ENCODE measurements at regions of chr1 and their contacts with region 1.

Region 1: DNA sequence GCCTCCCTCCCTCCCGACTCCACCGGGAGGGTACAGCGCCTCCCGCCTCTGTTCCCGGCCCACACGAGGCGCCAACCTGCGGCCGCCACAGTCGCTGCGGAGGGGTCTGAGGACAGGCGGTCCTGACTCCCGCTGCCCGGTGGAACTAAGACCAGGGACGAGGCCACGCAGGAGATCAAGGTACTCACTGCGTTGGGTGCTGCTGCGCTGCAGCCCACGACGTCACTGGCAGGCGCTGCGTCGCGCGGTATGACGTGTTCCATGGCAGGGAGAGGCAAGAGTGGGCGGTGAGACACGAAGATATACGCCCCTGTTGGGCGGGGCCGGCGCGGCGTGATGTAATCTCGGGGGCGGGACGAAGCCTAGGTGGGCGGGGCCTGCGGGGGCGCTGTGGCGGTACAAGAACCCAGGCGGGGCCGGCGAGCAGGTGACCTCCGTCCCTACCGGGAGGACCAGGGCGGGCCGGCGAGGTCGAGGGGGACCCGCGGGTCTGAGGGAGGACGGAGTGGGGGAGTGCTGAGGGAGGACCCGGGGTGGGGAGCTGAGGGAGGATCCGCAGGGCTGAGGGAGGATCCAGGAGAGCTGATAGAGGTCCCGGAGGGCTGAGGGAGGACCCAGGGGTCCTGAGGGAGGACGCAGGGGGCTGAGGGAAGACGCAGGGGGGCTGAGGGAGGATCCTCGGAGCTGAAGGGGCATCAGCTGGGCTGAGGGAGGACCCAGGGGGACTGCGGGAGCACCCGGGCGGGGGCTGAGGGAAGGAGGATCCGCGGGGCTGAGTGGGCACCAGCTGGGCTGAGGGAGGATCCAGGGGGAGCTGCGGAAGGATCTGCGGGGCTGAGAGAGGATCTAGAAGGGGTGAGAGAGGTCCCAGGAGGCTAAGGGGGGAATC is at the start of gene MRPL55:
- DNase-seq: peak; percentile 99
- H3K4me3 Mint-ChIP-seq: peak within 1 kb of the TSS; percentile 87
- H3K27ac Mint-ChIP-seq: peak within 1 kb of the TSS; percentile 89
- H3K4me1 Mint-ChIP-seq: peaks cover 28% of the 10 kb centered on the region
- H3K27me3 Mint-ChIP-seq: peaks cover 3% of the 10 kb centered on the region
- total RNA-seq, gene MRPL55: 53.3 and 61.7 TPM in 2 replicates

Region 2: DNA sequence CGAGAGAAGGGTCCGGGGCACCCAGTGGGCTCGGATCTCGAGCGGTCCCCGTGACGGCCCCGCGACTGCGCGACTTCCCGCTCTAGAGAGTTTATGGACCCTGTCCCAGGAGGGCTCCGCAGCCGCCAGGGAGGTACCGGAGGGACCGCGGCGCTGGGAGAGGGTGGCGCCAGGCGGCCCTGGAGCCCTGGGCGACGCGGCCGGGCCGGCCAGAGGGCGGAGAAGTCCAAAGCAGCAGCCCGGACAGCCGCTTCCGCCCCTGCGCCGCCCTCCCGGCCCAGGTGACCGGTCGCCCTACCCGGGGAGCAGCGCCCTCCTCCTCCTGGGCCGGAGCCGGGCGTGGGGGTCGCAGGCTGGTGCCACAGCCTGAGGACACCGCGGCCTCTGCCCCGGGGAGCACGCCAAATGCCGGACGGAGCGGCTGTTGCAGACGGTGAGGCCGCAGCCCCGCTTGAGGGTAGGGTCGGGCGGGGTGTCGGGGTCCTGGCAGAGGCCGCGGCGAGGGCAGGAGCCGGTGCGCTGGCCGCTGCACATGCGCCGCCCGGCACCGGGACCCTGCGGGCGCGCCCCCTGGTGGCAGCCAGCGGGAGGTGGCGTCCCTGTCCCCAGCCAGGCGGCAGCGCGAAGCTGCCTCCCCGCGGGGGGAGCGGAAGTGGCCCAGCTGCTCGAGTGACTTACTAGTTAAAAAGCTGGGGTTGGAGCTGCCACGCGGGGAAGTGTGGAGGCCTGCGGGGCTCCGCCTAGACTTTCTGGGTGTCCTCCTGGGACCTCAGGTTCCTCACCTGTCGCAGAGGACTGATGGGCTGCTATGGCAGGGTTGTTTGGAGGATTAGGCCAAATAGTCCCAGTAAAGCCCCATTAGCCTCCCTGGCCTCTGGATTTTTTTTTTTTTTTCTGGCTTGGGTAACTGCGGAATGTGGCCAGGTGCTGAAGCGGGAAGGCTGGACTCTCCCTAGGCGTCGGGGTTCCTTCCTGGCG is 566.9 kb before region 1 on chr1:
- intact Hi-C with region 1: loop called (anchors 1 kb)
- DNase-seq: peak; percentile 87
- H3K4me3 Mint-ChIP-seq: peak overlapping the region; percentile 56
- H3K27ac Mint-ChIP-seq: peak overlapping the region; percentile 55
- H3K4me1 Mint-ChIP-seq: no peaks in the 10 kb centered on the region
- H3K27me3 Mint-ChIP-seq: no peaks in the 10 kb centered on the region

Region 3: DNA sequence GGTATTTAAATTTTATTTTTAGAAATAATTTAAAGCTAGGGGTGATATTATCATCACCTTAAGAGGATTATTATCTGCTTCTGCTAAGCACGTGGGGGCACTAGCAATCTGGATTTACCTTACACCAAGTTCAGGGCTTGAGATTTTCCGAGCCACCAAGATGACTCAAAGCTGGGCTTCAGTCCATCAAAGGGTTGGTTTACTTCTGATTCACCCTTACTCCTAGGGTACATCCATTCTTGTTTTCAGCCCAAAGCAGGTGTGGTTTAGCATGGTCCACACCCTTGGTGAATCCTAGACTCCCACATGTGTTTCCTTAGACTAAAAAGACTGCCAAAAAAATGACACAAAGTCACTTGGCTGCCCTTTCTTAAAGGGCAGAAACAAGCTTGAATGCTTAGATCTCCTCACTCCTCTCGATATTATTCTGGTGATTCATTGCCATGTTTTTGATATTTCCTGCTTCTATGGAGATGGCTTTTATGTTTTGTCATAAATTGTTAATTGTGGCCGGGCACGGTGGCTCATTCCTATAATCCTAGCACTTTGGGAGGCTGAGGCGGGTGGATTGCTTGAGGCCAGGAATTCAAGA is 303.6 kb before region 1 on chr1:
- intact Hi-C with region 1: no loop called
- DNase-seq: no peak
- H3K4me3 Mint-ChIP-seq: no peak overlapping the region
- H3K27ac Mint-ChIP-seq: no peak overlapping the region
- H3K4me1 Mint-ChIP-seq: peaks cover 6% of the 10 kb centered on the region
- H3K27me3 Mint-ChIP-seq: peaks cover 25% of the 10 kb centered on the region

Region 4: GRCh38 chr1:228066891-228067654 is 42.2 kb before region 1 on chr1:
- intact Hi-C with region 1: no loop called
- DNase-seq: no peak
- H3K4me3 Mint-ChIP-seq: no peak overlapping the region
- H3K27ac Mint-ChIP-seq: no peak overlapping the region
- H3K4me1 Mint-ChIP-seq: no peaks in the 10 kb centered on the region
- H3K27me3 Mint-ChIP-seq: peaks cover 5% of the 10 kb centered on the region

Region 5: GRCh38 chr1:228082135-228082891 is 27.0 kb before region 1 on chr1 and contains the start of gene ARF1:
- intact Hi-C with region 1: loop called (anchors 1 kb)
- DNase-seq: peak; percentile 91
- H3K4me3 Mint-ChIP-seq: peak within 1 kb of the TSS; percentile 97
- H3K27ac Mint-ChIP-seq: peak within 1 kb of the TSS; percentile 91
- H3K4me1 Mint-ChIP-seq: peaks cover 37% of the 10 kb centered on the region
- H3K27me3 Mint-ChIP-seq: no peaks in the 10 kb centered on the region
- total RNA-seq, gene ARF1: 404 TPM in 2 replicates

Region 6: GRCh38 chr1:228139944-228140656 is 30.8 kb after region 1 on chr1 and contains the start of gene GUK1:
- intact Hi-C with region 1: loop called (anchors 1 kb)
- DNase-seq: peak; percentile 100
- H3K4me3 Mint-ChIP-seq: peak within 1 kb of the TSS; percentile 100
- H3K27ac Mint-ChIP-seq: peak within 1 kb of the TSS; percentile 97
- H3K4me1 Mint-ChIP-seq: peaks cover 22% of the 10 kb centered on the region
- H3K27me3 Mint-ChIP-seq: peaks cover 21% of the 10 kb centered on the region
- total RNA-seq, gene GUK1: 201 and 202 TPM in 2 replicates

Region 7: DNA sequence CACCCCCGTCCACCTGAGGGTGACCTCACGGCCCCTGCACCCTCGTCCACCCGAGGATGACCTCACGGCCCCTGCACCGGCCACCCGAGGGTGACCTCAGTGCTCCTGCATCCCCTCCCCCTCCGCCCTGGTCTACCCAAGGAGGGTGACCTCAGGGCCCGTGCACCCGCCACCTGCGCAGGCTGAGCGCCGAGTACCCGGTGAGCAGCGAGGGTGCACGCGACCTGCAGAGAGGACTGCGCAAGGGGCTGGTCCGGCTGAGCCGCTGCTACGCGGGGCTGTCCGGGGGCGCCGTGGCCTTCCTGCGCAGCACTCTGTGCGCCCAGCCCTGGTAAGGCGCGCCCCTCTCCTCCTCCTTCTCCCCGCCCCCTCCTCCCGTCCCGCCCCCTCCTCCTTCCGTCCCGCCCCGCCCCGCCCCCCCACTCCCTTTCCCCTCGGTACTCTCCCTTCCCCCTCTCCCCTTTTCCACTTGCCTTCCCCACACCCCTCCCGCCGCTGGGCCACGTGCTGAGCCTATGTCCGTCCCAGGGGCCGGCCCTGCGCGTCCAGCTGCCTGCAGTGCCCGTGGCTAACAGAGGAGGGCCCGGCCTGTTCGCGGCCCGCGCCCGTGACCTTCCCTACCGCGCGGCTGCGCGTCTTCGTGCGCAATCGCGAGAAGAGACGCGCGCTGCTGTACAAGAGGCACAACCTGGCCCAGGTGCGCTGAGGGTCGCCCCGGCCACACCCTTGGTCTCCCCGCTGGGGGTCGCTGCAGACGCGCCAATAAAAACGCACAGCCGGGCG is 269.0 kb after region 1 on chr1:
- intact Hi-C with region 1: loop called (anchors 1 kb)
- DNase-seq: peak; percentile 41
- H3K4me3 Mint-ChIP-seq: peak overlapping the region; percentile 79
- H3K27ac Mint-ChIP-seq: no peak overlapping the region
- H3K4me1 Mint-ChIP-seq: no peaks in the 10 kb centered on the region
- H3K27me3 Mint-ChIP-seq: peaks cover 25% of the 10 kb centered on the region